ENCODE measurements at regions of chr3 and their contacts with region 1.

Region 1: DNA sequence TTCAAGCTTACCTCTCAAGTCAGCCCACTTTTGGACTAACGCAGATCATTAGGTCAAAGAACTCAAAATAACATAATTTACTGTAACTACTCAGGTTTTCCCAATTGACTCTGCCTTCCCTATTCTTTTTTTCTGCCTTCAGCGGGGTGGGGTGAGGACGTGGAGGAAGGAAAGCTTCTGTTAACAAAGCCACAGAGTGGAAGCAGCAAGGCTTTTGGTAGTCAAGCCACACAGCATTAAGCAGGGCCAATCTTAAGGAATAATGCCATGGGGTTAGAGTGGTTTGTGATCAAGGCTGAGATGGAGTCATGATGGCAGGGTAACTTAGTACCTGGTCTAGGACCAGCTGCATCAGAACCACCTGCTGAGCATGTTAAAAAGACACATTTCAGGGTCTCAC is 277.5 kb downstream of the TIGIT start:
- DNase-seq: no peak
- ATAC-seq: no peak

Region 2: DNA sequence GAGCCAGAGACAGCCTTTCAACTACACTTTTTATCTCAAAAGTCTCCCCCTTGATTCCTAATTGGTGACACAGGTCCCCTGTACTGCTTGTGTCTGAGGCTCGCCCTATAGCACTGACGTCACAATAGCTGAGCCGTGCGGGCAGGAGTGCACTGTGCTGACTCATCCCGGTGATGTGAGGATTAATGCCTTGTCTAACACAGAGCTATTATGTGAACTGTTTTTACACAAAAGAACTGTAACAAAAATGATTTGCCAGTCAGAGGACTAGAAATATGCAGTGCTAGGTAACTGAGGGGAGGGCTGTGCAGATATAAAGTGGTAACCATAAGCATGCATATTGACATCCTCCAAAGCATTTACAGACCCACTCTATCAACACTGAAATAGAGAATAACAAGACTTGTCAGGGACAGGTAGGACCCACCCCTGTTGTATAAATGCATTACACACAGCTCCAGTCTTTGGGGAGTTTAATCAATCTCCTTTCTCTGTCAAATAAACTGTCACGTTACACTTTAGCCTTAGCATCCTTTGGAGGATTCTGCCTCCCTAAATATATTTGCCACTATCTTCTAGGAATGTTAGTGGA is 72.5 kb before region 1 on chr3:
- intact Hi-C with region 1: no loop called
- DNase-seq: no peak
- ATAC-seq: no peak

Region 3: DNA sequence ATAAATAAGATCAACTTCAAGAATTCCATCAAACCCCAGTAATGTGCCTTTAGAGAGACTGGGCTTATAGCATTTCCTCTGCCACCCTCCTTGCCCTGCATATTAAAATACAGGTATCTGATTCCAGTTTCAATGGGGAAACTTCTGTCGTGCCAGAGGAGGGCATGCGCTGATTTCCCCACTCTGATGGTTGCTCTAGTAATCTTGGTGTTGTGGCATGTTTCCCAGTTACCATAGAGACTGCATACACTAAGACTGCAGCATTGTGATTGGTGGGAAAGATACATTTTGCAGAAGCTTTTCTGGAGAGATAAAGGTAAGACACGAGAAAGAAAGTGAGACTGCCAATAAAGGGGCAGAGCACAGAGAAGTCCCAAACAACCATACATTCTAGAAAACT is 51.9 kb before region 1 on chr3:
- intact Hi-C with region 1: loop called (anchors 10 kb)
- DNase-seq: no peak
- ATAC-seq: peak; percentile 73

Region 4: GRCh38 chr3:114985776-114986175 is 414.4 kb after region 1 on chr3:
- intact Hi-C with region 1: no loop called
- DNase-seq: no peak
- ATAC-seq: no peak

Measured in Right ventricle myocardium inferior (tissue), 1 donor.